Activated CD8-positive, alpha-beta memory T cell treated with anti-CD3 and anti-CD28 coated beads, Interleukin-2, amount 10 ng/mL, durations not matched to agents 7 days and 5 days (primary cell): ENCODE measurements at regions of chr15 and their contacts with region 1.

Region 1: GRCh38 chr15:99104788-99105513 is at the start of gene SYNM:
- DNase-seq: peak; percentile 46
- ATAC-seq: peak; percentile 52
- H3K4me3 Mint-ChIP-seq: peak within 1 kb of the TSS; percentile 60
- H3K27ac Mint-ChIP-seq: peak within 1 kb of the TSS; percentile 15
- H3K4me1 Mint-ChIP-seq: peaks cover 38% of the 10 kb centered on the region
- H3K27me3 Mint-ChIP-seq: peaks cover 58% of the 10 kb centered on the region
- total RNA-seq, gene SYNM: 1.5 TPM

Region 2: DNA sequence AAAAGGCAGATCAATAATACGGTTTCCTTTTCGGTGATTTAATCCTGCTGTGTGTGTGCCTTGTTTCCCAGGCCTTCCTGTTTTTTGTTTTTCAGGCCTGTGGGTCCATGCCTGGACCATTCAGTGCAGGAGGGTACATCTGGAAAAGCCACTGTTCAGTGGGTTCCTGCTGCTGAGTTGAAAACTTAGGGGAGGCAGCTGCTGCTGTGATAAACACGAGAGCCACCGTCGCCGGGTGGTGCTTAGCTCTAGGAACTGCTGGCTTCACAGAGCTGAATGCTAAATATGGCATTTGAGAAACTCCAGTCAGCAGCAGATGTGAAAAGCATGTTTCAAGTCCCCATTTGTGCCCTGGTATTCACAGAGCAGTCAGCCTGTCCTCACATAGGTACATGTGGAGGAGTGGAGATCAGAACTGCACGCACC is 43.9 kb after region 1 on chr15:
- CTCF ChIA-PET with region 1: no interaction called
- DNase-seq: no peak
- ATAC-seq: no peak
- H3K4me3 Mint-ChIP-seq: no peak overlapping the region
- H3K27ac Mint-ChIP-seq: no peak overlapping the region
- H3K4me1 Mint-ChIP-seq: no peaks in the 10 kb centered on the region
- H3K27me3 Mint-ChIP-seq: peaks cover 2% of the 10 kb centered on the region

Region 3: DNA sequence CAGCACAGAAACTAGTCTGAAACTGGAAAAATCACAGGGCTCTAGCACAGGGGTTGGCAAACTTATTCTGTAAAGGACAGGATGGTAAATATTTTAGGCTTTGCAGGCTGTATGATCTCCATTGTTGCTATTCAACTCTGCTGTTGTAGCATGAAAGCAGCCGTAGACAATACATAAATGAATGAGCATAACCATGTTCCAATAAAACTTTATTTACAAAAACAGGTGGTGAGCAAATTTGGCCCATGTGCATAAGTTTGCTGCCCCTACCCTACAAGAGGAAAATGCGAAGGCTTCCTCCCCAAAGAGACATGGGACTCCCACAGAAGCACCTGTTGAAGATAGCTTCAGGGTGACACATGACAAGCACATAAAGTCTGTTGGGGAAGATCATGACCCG is 59.2 kb after region 1 on chr15:
- CTCF ChIA-PET with region 1: no interaction called
- DNase-seq: no peak
- ATAC-seq: no peak
- H3K4me3 Mint-ChIP-seq: no peak overlapping the region
- H3K27ac Mint-ChIP-seq: no peak overlapping the region
- H3K4me1 Mint-ChIP-seq: peaks cover 6% of the 10 kb centered on the region
- H3K27me3 Mint-ChIP-seq: no peaks in the 10 kb centered on the region

Region 4: GRCh38 chr15:99213187-99213811 is 108.3 kb after region 1 on chr15:
- CTCF ChIA-PET with region 1: interaction called, 13 read pairs
- DNase-seq: peak; percentile 77
- ATAC-seq: peak; percentile 82
- H3K4me3 Mint-ChIP-seq: no peak overlapping the region
- H3K27ac Mint-ChIP-seq: no peak overlapping the region
- H3K4me1 Mint-ChIP-seq: no peaks in the 10 kb centered on the region
- H3K27me3 Mint-ChIP-seq: peaks cover 13% of the 10 kb centered on the region

Region 5: DNA sequence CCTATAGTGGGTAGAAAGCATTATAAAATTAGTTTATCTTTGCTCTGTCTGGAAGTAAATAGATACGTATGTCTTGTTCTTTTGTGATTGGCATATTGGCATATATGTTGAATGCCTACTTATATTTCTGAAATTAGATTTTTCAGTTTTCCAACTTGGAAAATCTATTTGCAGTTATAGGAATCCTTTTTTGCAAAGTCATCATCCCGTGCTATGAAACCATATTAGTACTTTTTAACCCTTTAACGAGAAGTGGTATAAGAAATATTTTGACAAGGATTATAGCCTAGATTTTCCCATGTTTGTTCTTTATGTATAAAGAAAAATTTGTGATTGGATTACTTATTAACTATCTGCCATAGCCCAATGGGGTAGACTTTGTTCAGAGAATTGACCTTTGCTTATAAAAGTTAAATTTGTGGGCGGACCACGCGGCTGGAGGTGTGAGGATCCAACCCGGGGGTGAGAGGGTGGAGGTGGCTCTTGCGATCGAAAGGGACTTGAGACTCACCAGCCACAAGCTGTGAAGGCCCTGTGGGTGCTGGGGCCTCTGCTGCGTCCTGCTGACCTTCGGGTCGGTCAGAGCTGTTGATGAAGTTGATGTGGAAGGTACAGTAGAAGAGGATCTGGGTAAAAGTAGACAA is 152.3 kb after region 1 on chr15:
- CTCF ChIA-PET with region 1: no interaction called
- DNase-seq: no peak
- ATAC-seq: no peak
- H3K4me3 Mint-ChIP-seq: no peak overlapping the region
- H3K27ac Mint-ChIP-seq: no peak overlapping the region
- H3K4me1 Mint-ChIP-seq: peaks cover 16% of the 10 kb centered on the region
- H3K27me3 Mint-ChIP-seq: no peaks in the 10 kb centered on the region